MCF 10A (cell line): ENCODE measurements at regions of chr7 and their contacts with region 1.

Region 1: GRCh38 chr7:47968847-47969774 is 10.3 kb downstream of the HUS1 start:
- DNase-seq: peak; percentile 60
- H3K4me3 Mint-ChIP-seq: no peak overlapping the region
- H3K27ac Mint-ChIP-seq: no peak overlapping the region
- H3K4me1 Mint-ChIP-seq: peaks cover 2% of the 10 kb centered on the region
- H3K27me3 Mint-ChIP-seq: no peaks in the 10 kb centered on the region
- CTCF ChIP-seq: peak; percentile 80

Region 2: GRCh38 chr7:47954231-47954911 is 14.7 kb before region 1 on chr7:
- CTCF ChIA-PET with region 1: interaction called, 11 read pairs
- POLR2A ChIA-PET with region 1: no interaction called
- intact Hi-C with region 1: no loop called
- DNase-seq: no peak
- H3K4me3 Mint-ChIP-seq: no peak overlapping the region
- H3K27ac Mint-ChIP-seq: no peak overlapping the region
- H3K4me1 Mint-ChIP-seq: no peaks in the 10 kb centered on the region
- H3K27me3 Mint-ChIP-seq: no peaks in the 10 kb centered on the region
- CTCF ChIP-seq: no peak

Region 3: DNA sequence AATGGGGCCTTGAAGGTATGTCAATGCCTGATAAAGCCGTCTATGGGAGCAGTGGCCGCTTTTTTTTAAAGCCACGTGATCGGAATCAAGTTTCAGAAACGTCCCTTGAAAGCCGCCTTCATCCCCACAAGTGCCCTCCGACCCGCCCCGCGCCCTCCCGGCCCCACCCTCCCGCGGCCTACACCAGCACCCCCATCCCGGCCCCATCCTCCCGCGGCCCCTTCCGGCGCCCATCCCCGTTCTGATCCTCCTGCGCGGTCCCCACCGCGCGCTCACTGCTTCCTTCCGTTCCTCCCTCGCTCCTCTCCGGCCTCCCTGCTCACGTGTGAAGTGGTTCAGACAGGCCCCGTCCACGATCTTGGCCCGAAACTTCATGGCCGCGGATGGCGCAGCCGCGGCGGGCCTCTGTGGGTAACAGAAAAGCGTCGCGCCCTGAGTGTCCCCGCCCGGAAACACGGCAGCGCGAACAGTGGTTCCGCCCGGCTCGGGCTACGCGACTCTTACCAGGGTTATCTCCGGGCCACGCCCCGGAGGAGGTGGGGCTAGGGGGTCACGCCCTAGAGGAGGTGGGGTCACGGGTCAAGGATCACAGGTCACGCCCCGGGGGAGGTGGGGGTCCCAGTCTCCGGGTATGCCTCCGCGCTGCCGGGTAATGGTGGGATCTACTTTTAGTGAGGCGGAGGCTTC is 10.2 kb after region 1 on chr7 and contains the start of gene HUS1:
- CTCF ChIA-PET with region 1: interaction called, 17 read pairs
- POLR2A ChIA-PET with region 1: interaction called, 3 read pairs
- intact Hi-C with region 1: no loop called
- DNase-seq: peak; percentile 86
- H3K4me3 Mint-ChIP-seq: peak within 1 kb of the TSS; percentile 81
- H3K27ac Mint-ChIP-seq: peak within 1 kb of the TSS; percentile 96
- H3K4me1 Mint-ChIP-seq: peaks cover 16% of the 10 kb centered on the region
- H3K27me3 Mint-ChIP-seq: no peaks in the 10 kb centered on the region
- CTCF ChIP-seq: no peak
- total RNA-seq, gene HUS1: 39.9 and 42.8 TPM in 2 replicates